Activated naive CD4-positive, alpha-beta T cell treated with anti-CD3 and anti-CD28 coated beads for 36 hours (primary cell): ENCODE measurements at regions of chr5 and their contacts with region 1.

Region 1: GRCh38 chr5:131289738-131290137 is 25.9 kb downstream of the CDC42SE2 start:
- DNase-seq: peak; percentile 60
- H3K4me3 Mint-ChIP-seq: peak overlapping the region; percentile 75
- H3K27ac Mint-ChIP-seq: peak overlapping the region; percentile 88
- H3K4me1 Mint-ChIP-seq: peaks cover 75% of the 10 kb centered on the region
- H3K27me3 Mint-ChIP-seq: no peaks in the 10 kb centered on the region

Region 2: DNA sequence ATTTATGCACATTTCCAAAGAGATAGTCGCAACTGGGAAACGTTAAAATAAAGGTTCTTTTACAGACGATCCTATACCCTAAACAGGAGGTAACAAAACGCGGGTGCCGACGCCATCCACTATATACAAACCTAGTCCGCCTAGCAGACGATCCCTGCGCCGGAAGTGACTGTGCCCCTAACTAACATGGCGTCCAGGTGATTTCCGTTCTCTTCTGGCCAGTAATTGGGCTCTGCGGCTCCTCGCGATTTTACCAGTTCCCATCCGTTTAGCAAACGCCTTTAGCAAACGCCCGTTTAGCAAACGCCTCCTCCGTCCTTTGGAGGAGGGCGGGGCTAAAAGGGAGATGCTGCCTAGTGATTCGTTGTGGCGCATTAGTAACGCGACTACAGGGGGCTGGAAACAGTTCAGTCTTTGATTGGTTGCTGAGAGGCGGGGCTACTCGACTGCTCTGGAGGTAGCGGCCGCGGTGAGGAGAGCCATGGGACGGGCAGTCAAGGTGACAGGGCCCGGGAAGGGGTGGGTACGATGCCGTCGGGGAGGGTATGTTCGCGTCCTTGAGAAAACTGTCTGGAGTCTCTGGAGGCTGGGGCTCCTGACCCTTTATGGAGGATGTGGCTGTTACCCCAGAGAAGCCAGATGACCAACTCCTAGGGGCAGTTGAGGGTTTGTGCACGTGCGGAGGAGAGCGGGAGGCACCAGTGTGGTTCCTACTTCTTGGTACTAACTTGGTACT is 119.0 kb before region 1 on chr5 and contains the start of gene LYRM7:
- CTCF ChIA-PET with region 1: interaction called, 5 read pairs
- intact Hi-C with region 1: loop called (anchors 1 kb)
- DNase-seq: peak; percentile 98
- H3K4me3 Mint-ChIP-seq: peak within 1 kb of the TSS; percentile 99
- H3K27ac Mint-ChIP-seq: peak within 1 kb of the TSS; percentile 92
- H3K4me1 Mint-ChIP-seq: peaks cover 44% of the 10 kb centered on the region
- H3K27me3 Mint-ChIP-seq: no peaks in the 10 kb centered on the region
- total RNA-seq, gene LYRM7: 14.6 to 15.0 TPM

Region 3: DNA sequence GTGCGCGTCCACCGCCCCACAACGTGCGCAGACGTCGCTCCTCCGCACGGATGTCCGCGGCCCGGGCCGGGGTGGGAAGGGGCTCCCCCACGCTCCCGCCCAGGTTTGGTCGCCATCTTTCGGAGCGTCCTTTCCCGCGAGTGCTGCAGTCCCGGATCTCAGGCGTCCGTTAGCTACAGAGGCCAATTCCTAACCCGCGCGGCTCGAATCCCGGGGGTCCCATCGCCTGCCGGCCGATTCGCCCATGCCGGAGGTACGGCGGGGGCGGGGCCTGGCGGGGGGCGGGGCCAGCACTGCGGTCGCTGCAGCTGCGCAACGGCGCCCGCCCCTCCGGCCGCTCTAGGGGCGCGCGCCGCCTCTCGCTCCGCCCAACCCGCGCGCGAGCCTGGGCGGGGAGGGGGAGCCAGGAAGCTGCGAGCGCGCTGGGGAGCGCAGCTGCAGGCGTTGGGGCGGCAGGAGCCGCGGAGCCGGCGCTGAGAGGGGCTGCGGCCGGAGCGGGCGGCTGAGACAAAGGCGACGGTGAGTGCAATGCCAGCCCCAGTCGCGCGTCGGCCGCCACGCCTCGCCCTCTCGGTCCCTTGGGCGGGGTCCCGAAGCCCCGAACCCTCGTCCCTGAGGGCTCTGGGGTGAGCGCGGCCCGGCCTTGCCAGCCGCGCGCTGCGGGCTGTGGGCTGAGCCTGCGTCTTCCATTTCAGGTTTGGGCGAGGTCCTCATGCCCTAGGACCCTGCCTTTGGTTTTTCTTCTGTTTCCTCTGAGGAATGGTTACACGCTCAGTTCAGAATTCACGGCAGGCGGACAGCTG is 25.9 kb before region 1 on chr5 and contains the start of gene CDC42SE2:
- CTCF ChIA-PET with region 1: interaction called, 7 read pairs
- intact Hi-C with region 1: loop called (anchors 1 kb)
- DNase-seq: peak; percentile 81
- H3K4me3 Mint-ChIP-seq: peak within 1 kb of the TSS; percentile 75
- H3K27ac Mint-ChIP-seq: peak within 1 kb of the TSS; percentile 93
- H3K4me1 Mint-ChIP-seq: peaks cover 48% of the 10 kb centered on the region
- H3K27me3 Mint-ChIP-seq: no peaks in the 10 kb centered on the region
- total RNA-seq, gene CDC42SE2: 106 to 108 TPM

Region 4: DNA sequence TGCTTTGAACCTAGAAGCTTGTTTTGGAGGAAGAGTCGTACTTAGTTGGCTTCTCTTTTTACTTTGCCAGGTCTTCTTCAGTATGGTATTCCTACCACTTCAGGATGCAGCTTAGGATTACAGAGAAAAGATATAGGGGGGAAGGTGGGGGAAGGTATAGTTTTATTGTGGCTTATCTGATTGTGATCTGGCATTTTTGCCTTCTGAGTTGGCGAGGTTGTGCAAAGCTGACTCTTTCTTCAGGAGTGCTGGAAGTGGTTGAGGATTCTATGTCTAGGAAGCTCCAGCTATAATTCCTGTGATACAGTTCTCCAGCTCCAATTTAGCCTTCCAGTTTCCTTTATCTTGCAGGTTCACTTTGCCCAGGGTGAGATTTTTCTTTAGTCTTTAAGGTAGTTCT is 18.9 kb before region 1 on chr5:
- CTCF ChIA-PET with region 1: interaction called, 7 read pairs
- intact Hi-C with region 1: loop called (anchors 1 kb)
- DNase-seq: no peak
- H3K4me3 Mint-ChIP-seq: peak overlapping the region; percentile 50
- H3K27ac Mint-ChIP-seq: peak overlapping the region; percentile 97
- H3K4me1 Mint-ChIP-seq: peaks cover 75% of the 10 kb centered on the region
- H3K27me3 Mint-ChIP-seq: no peaks in the 10 kb centered on the region

Region 5: GRCh38 chr5:131357739-131358561 is 68.2 kb after region 1 on chr5:
- CTCF ChIA-PET with region 1: no interaction called
- intact Hi-C with region 1: loop called (anchors 1 kb)
- DNase-seq: peak; percentile 67
- H3K4me3 Mint-ChIP-seq: peak overlapping the region; percentile 54
- H3K27ac Mint-ChIP-seq: peak overlapping the region; percentile 91
- H3K4me1 Mint-ChIP-seq: peaks cover 67% of the 10 kb centered on the region
- H3K27me3 Mint-ChIP-seq: no peaks in the 10 kb centered on the region